Activated naive CD4-positive, alpha-beta T cell treated with anti-CD3 and anti-CD28 coated beads for 36 hours (primary cell): ENCODE measurements at regions of chr2 and their contacts with region 1.

Region 1: GRCh38 chr2:102033031-102033749 is 41.4 kb downstream of the IL1R2 start:
- DNase-seq: peak; percentile 22
- H3K4me3 Mint-ChIP-seq: no peak overlapping the region
- H3K27ac Mint-ChIP-seq: peak overlapping the region; percentile 48
- H3K4me1 Mint-ChIP-seq: peaks cover 40% of the 10 kb centered on the region
- H3K27me3 Mint-ChIP-seq: no peaks in the 10 kb centered on the region

Region 2: DNA sequence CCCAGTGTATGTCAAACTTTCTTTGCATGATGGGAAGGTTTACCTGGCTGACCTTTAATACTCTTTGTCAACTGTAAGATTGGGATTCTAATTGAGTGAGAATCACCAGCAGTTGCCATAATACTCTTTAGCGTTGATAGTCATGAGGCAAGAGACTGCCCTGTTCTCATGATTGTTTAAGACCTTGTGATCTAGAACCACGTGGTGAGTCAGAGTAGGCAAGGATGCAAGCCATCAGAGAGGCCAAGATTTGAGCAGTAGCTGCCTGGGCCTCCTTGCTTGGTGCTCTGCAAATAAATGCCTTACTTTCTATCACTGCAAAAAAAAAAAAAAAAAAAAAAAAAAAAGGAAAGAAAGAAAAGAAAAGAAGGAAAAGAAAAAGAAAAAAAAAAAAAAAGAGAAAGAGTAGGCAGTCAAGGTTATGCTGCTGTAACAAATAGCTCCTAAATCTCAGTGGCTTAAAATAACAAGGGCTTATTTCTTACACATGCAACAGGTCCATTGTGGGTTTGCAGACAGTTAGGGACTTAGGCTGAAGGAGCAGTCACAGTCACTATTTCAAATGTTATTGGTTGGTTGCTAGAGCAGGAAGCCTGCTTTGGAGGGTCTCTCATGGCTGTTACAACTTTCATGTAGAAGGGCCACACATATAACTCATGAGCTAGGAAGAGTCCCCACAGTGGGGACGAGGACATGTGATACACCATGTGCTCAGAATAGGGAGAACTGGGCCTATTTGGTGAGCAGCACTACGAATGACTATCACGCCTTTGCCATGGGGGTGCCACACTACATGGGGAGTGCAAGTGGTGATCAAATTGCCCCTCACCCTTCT is 19.8 kb before region 1 on chr2:
- CTCF ChIA-PET with region 1: no interaction called
- intact Hi-C with region 1: loop called (anchors 1 kb)
- DNase-seq: peak; percentile 44
- H3K4me3 Mint-ChIP-seq: no peak overlapping the region
- H3K27ac Mint-ChIP-seq: peak overlapping the region; percentile 69
- H3K4me1 Mint-ChIP-seq: peaks cover 37% of the 10 kb centered on the region
- H3K27me3 Mint-ChIP-seq: no peaks in the 10 kb centered on the region

Region 3: DNA sequence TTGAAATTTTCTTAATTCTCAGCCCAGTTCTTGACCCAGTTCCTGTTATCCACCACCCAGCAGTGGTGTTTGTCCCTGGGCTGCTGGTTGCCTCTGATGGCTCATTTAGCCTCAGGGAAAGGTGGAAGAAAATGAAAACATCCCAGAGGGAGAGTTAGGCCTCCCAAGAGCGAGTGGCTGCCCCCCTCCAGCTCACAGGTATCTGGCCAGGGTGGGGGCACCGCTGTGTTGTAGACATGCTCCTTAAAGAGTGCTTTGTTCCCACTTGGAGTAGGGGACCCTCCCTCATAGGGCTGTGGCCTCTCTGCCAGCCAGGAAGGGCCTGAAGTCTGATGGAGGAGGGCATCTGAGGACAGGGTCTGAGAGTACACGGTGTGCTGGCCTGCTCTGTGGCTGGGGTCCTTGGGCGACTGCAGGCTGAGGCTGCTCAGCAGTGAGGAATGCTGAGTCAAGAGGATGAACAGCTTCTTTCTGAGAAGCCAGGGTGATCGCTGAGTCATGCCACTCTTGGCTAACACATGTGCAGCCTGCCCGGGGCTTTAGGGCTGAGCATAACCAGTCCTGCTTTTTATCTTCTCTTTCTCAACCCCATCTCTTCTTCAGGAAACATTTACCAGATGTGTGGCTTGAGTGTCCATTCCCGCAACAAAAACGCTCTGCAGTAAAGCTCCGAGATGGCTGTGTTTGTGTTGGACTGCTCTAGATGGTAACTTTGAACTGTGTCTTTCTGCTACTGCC is 30.9 kb after region 1 on chr2:
- CTCF ChIA-PET with region 1: no interaction called
- intact Hi-C with region 1: loop called (anchors 2 kb)
- DNase-seq: peak; percentile 73
- H3K4me3 Mint-ChIP-seq: no peak overlapping the region
- H3K27ac Mint-ChIP-seq: peak overlapping the region; percentile 44
- H3K4me1 Mint-ChIP-seq: peaks cover 27% of the 10 kb centered on the region
- H3K27me3 Mint-ChIP-seq: no peaks in the 10 kb centered on the region